Gastrocnemius medialis (tissue), 4 donors: ENCODE measurements at regions of chr2 and their contacts with region 1.

Region 1: GRCh38 chr2:27400348-27401135 is 8.8 kb downstream of the PPM1G start:
- DNase-seq: no peak
- ATAC-seq: no peak
- H3K4me3 ChIP-seq: no peak overlapping the region
- H3K27ac ChIP-seq: no peak overlapping the region
- H3K4me1 ChIP-seq: no peaks in the 10 kb centered on the region
- H3K27me3 ChIP-seq: no peaks in the 10 kb centered on the region
- CTCF ChIP-seq: no peak
- POLR2A ChIP-seq: no peak

Region 2: DNA sequence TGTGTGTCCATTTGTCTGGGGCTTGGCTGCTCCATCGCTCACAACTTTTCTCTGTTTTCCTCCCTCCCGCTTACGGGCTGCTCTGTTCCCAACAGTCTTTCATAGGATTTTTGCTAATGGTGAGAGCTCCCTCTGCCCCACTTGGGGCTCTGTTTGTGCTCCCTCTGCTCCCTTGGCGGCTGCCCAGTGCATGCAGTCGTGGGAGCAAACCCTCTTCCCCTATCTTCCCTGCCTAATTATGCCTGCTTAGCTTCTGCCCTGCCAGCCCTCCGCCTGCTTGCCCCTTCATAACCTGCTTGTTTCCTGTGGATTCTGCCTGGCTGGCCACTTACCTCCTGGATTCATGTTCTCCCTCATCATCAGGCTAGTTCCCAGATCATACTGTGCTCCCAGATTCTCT is 35.1 kb after region 1 on chr2:
- in situ Hi-C with region 1: no loop called
- intact Hi-C with region 1: loop called (anchors 5 kb)
- DNase-seq: no peak
- ATAC-seq: no peak
- H3K4me3 ChIP-seq: no peak overlapping the region
- H3K27ac ChIP-seq: no peak overlapping the region
- H3K4me1 ChIP-seq: peaks cover 16 to 23% of the 10 kb centered on the region in 2 donors
- H3K27me3 ChIP-seq: no peaks in the 10 kb centered on the region
- CTCF ChIP-seq: no peak
- POLR2A ChIP-seq: no peak

Region 3: DNA sequence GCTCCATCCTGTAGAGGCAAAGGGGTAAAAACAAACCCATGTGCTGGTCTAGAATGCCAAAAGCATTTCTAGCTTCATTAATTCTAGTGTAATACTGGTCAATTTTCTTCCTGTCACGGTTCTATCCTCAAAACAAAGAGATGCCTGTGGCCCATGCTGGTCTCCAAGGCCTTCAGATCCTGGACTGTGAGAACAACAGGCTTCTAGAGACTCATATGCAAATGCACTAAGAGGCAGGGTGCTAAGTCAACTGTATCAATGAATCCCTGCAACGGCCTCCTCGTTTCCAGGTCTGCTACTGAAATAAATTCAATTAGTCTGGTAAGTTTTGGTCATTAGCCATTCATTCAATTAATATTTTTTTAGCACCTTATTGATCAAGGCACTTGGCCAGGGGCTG is 85.0 kb after region 1 on chr2:
- in situ Hi-C with region 1: no loop called
- intact Hi-C with region 1: no loop called
- DNase-seq: no peak
- ATAC-seq: no peak
- H3K4me3 ChIP-seq: no peak overlapping the region
- H3K27ac ChIP-seq: no peak overlapping the region
- H3K4me1 ChIP-seq: peaks cover 13 to 19% of the 10 kb centered on the region in 2 donors
- H3K27me3 ChIP-seq: no peaks in the 10 kb centered on the region
- CTCF ChIP-seq: no peak
- POLR2A ChIP-seq: no peak